ENCODE measurements at regions of chr6 and their contacts with region 1.

Region 1: GRCh38 chr6:32879691-32880090 is 25.7 kb downstream of the PSMB9 start:
- H3K4me3 ChIP-seq: no peak overlapping the region
- H3K27ac ChIP-seq: no peak overlapping the region
- H3K4me1 ChIP-seq: no peaks in the 10 kb centered on the region
- CTCF ChIP-seq: no peak

Region 2: GRCh38 chr6:32947552-32948465 is 68.1 kb after region 1 on chr6:
- CTCF ChIA-PET with region 1: interaction called, 58 read pairs
- POLR2A ChIA-PET with region 1: no interaction called
- H3K4me3 ChIP-seq: no peak overlapping the region
- H3K27ac ChIP-seq: no peak overlapping the region
- H3K4me1 ChIP-seq: no peaks in the 10 kb centered on the region
- CTCF ChIP-seq: peak; percentile 82

Measured in HEK293 (cell line).